ENCODE measurements at regions of chr3 and their contacts with region 1.

Region 1: GRCh38 chr3:171187706-171188290 is 161.3 kb upstream of the SLC2A2 start:
- DNase-seq: no peak
- ATAC-seq: peak; percentile 71

Region 2: GRCh38 chr3:171218069-171218468 is 30.3 kb after region 1 on chr3:
- intact Hi-C with region 1: no loop called
- DNase-seq: no peak
- ATAC-seq: no peak

Region 3: DNA sequence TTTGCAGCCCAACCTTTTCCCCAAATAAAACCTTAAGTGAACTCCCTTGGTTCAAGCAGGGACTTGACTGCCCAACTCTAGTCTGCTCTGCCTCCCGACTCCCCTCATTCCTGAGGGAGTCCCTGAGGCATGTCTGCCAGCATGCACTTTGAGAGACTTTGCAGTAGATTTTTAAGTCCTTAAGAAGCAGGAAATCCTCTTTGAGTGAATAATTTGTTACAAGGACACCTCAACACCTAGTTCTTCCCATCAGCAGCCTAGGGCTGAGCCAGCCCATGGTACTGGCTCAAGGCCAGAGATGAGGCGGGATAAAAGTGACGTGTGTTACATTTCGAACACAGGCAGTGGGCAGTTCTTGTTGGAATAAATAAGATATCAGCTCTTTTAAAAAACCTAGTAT is 43.1 kb after region 1 on chr3:
- intact Hi-C with region 1: loop called (anchors 5 kb)
- DNase-seq: no peak
- ATAC-seq: peak; percentile 40

Region 4: DNA sequence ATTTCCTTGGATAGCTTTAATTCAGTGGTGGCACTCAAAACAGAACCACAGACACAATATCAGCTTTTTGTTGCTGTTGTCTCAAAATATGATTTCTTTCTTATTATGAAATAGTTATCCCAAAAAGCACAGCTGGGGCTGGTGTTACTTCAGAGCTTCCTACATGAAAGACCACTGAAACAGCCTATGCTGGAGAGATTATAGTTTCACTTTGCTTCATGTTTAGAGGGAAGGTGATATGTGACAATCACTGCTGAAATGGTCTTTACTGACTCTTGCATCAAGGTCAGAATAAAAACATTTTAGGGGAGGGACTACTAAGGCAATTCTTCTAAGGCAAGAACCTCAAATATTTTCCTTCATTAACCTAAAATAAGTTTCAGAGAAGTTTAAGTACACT is 81.7 kb after region 1 on chr3:
- intact Hi-C with region 1: loop called (anchors 10 kb)
- DNase-seq: no peak
- ATAC-seq: no peak

Region 5: DNA sequence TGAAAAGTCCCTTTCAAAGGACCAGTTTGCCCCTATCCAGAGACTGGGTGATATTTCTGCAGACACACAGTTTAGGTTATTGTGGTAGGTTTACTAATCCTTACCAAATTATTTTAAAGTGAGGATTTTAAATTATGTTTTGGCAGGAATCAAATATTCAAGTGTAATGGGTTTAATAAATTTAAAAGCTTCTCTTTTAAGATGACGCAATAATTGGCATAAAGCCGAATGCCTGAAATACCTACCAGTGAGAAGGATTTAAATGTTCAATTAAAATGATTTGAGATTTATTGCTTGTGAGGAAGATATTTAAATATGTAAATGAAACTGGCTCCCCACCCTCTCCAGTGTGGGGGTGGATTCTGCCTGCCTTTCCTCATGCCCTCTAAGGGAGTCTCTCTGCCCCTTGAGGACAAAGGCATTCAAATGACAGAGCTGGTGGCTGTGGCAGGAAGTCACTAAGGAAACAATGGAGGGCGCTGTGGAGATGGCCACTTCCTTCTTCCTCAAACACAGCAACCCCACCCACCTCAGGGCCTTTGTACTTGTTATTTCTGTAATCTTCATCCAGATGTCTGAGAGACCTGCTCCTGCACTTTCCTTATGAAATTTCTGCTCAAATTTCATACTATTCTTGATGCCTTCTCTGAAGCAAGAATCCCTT is 140.8 kb after region 1 on chr3:
- intact Hi-C with region 1: loop called (anchors 10 kb)
- DNase-seq: peak; percentile 47
- ATAC-seq: peak; percentile 33

Region 6: DNA sequence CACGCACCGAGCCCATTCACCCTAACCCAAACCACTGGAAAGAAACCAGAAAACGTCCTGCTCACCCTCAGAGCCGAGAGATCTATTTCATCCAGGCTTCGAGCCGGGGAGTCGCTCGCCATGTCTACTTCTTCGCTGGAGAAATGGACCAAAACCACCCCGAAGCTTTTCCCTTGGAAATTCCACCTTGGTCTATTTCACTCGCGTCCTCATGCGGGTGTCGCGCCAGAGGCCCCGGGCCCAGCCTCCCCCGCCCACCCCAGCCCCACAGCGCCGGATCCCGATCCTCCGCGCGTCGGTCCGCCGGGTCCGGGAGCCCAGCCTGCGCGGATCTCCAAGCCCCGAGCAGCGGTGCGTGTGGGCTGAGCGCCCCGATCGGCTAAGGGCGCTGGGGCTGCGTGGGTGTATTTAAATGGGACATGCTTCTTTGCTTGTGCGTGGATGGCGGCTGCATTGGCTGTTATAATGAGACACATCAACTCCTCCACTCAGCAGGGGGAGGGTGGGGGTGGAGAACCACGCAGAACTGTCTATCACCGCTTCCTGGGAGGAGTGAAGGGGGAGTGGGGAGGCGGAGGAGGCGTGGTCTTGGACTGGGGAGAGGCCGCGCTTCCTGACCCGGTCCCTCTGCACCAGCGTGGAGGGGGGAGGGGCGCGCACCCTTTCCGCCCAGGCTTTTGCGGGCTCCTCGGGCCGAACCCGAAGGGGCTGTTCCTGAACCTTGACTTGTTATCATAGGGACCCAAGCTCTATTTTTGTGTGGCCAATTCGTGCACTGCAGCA is 272.3 kb after region 1 on chr3 and contains the start of gene TNIK:
- intact Hi-C with region 1: loop called (anchors 10 kb)
- DNase-seq: peak; percentile 95
- ATAC-seq: peak; percentile 95
- total RNA-seq, gene TNIK: 22.5 TPM

Region 7: GRCh38 chr3:171566803-171567422 is 379.1 kb after region 1 on chr3:
- intact Hi-C with region 1: loop called (anchors 10 kb)
- DNase-seq: no peak
- ATAC-seq: peak; percentile 59